H1 (cell line): ENCODE measurements at regions of chr3 and their contacts with region 1.

Region 1: DNA sequence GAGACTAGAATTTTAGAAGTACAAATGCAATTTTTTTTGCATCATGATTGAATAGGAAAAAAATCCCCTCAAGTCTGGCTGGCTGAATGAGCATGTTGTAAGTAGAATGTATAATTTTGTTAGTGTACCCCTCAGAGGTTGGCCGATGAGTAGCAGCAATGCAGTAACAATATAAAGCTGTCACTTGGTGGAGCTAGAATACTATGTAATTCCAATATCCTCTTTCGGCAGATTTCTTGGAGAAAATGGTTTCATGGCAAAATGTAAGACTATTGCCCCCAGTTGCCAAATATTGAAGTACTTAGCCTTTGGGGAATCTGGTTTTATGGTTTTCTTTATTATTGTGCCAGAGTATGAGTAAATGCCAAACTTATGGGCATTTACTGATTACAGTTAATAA is 39.8 kb upstream of the SGO1 start:
- DNase-seq: no peak
- H3K4me3 ChIP-seq: no peak overlapping the region
- H3K27ac ChIP-seq: no peak overlapping the region
- H3K4me1 ChIP-seq: peaks cover 0 to 3% (median 0%) of the 10 kb centered on the region in 4 experiments; a peak in 2 of 7 replicates
- H3K27me3 ChIP-seq: no peaks in the 10 kb centered on the region
- CTCF ChIP-seq: peak in 2 of 3 experiments; percentile 53 to 73; a peak in 3 of 4 replicates
- EP300 ChIP-seq: no peak
- POLR2A ChIP-seq: no peak
- RAD21 ChIP-seq: peak; percentile 87

Region 2: DNA sequence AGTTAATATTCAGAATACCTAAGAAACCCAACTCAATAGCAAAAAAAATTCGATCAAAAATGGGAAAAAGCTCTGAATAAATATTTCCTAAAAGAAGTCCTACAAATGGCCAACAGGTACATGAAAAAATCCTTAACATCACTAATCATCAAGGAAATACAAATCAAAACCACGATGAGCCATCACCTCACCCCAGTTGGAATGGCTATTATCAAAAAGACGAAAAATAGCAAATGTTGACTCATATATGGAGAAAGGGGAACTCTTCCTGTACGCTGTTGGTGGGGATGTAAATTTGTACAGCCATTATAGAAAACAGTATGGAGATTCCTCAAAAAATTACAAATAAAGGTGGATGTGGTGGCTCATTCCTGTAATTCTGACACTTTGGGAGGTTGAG is 10.1 kb before region 1 on chr3:
- CTCF ChIA-PET with region 1: interaction called, 12 read pairs
- POLR2A ChIA-PET with region 1: no interaction called
- DNase-seq: no peak
- H3K4me3 ChIP-seq: no peak overlapping the region
- H3K27ac ChIP-seq: no peak overlapping the region
- H3K4me1 ChIP-seq: no peaks in the 10 kb centered on the region
- H3K27me3 ChIP-seq: no peaks in the 10 kb centered on the region
- CTCF ChIP-seq: no peak
- EP300 ChIP-seq: no peak
- POLR2A ChIP-seq: no peak
- RAD21 ChIP-seq: no peak

Region 3: DNA sequence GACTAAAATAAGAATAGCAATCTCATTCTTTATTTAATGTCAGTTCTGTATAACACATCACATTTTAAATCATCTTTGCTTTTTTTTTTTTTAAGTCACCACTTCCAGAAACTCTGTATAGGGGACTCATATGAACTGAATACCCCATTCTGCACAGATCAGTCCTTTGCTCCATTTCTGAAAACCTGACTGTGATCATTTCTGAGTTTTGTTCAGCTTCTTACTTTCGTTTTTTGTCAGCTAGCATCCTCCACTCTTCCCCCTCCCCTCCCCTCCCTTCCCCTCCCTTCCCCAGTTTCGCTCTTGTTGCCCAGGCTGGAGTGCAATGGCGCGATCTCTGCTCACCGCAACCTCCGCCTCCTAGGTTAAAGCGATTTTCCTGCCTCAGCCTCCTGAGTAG is 10.0 kb after region 1 on chr3:
- CTCF ChIA-PET with region 1: interaction called, 11 read pairs
- POLR2A ChIA-PET with region 1: no interaction called
- DNase-seq: no peak
- H3K4me3 ChIP-seq: no peak overlapping the region
- H3K27ac ChIP-seq: no peak overlapping the region
- H3K4me1 ChIP-seq: no peaks in the 10 kb centered on the region
- H3K27me3 ChIP-seq: no peaks in the 10 kb centered on the region
- CTCF ChIP-seq: no peak
- EP300 ChIP-seq: no peak
- POLR2A ChIP-seq: no peak
- RAD21 ChIP-seq: no peak